ENCODE measurements at regions of chr5 and their contacts with region 1.

Region 1: DNA sequence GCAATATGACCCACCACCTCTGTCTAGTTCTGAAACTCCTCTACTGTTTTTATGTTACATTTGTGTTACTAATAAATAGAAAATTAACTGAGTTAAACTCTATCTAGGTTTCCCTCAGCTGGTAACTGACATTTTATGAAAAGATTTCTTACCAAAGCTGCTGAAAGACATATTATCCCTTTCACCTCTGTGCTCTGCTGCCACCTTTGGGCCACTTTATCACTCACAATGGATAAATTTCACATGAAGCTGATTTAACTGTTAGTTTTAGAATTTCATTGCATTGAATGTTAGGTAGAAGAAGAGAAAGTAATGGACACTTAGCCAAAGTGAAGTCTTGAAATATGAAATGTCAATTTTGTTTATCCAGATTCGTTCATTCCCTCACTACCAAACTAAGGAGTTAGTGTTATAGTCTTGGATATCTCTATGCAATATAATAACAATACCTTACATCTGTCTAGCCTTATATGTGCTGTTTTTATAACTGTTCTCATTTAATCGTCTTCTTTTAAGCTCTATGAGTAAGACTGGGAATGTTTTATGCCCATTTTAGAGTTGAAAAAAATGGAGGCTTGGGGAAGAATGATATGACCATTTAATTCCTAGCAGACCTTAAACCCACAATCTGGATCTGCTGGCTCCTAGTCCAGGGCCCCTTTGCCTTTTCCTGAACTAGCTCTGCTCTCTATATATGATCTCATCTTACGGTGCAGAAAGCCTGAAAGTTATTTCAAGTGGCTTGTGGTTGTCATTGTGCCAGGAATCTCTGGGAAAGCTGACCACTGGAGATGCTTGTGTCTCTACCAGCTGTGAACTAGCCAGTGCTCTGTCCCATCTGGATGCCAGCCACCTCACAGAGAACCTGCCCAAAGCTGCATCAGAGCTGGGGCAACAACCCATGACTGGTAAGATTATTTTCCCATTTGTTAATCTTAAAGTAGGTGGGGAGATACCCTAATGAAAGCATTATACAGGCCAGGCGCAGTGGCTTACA is 97.1 kb downstream of the GOLPH3 start:
- DNase-seq: peak; percentile 70
- H3K4me3 Mint-ChIP-seq: no peak overlapping the region
- H3K27ac Mint-ChIP-seq: no peak overlapping the region
- H3K4me1 Mint-ChIP-seq: no peaks in the 10 kb centered on the region
- H3K27me3 Mint-ChIP-seq: no peaks in the 10 kb centered on the region
- CTCF ChIP-seq: peak; percentile 75

Region 2: DNA sequence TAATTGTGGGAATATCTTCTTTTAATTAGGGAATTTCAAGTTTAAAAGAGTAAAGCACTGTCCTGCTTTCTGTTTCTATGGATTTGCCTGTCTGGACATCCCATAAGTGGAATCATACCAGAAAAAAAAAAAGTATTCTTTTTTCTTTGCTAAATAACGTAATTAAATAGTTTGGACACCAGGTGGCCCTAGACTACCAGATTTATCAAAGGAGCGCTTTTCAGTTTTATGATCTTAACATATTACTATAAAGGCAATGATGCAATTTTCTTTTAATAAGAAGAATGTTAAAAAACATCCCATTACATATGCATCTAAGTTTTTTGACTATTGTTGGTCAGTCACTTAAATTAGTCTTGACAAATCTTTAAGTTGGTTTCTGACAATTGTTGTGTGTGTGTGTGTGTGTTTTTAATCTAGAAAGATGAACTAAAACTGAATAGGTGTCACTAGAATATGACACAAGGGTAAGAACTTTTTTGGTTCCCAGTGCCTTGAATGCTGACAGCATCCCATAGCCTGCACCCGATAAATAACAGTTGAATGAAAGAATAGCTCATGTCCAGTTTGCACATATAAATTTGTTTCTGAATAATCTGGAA is 495.4 kb before region 1 on chr5:
- CTCF ChIA-PET with region 1: interaction called, 3 read pairs
- POLR2A ChIA-PET with region 1: no interaction called
- intact Hi-C with region 1: loop called (anchors 5 kb)
- DNase-seq: peak; percentile 59
- H3K4me3 Mint-ChIP-seq: no peak overlapping the region
- H3K27ac Mint-ChIP-seq: no peak overlapping the region
- H3K4me1 Mint-ChIP-seq: peaks cover 5% of the 10 kb centered on the region
- H3K27me3 Mint-ChIP-seq: peaks cover 59% of the 10 kb centered on the region
- CTCF ChIP-seq: peak; percentile 37

Region 3: DNA sequence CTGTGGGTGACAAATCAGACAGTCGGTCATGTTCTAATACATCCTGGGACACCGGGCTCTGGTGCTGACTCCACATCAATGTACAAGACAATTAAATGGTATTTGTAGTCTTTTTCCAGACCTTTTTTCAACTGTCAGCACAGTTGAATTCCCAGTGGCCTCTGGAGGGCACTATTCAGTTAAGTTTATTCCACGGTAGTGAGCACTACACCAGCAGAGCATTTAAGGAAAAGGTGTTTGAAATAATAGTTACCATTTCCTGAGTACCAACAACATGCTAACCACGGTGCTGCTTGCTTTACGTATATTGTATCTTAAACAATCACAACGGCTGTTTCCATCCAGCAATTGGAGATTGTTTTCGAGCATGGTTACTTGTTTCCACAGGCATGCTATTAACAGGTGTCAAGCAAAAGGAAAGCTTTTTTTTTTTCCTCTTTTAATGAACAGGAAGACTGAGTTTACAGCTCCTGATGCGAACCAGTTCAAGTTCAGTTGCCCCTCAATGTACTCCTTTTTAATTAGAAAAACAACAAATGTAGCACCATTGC is 251.4 kb before region 1 on chr5:
- CTCF ChIA-PET with region 1: interaction called, 193 read pairs
- POLR2A ChIA-PET with region 1: interaction called, 15 read pairs
- intact Hi-C with region 1: loop called (anchors 1 kb)
- DNase-seq: peak; percentile 76
- H3K4me3 Mint-ChIP-seq: no peak overlapping the region
- H3K27ac Mint-ChIP-seq: no peak overlapping the region
- H3K4me1 Mint-ChIP-seq: peaks cover 6% of the 10 kb centered on the region
- H3K27me3 Mint-ChIP-seq: no peaks in the 10 kb centered on the region
- CTCF ChIP-seq: peak; percentile 71

Region 4: DNA sequence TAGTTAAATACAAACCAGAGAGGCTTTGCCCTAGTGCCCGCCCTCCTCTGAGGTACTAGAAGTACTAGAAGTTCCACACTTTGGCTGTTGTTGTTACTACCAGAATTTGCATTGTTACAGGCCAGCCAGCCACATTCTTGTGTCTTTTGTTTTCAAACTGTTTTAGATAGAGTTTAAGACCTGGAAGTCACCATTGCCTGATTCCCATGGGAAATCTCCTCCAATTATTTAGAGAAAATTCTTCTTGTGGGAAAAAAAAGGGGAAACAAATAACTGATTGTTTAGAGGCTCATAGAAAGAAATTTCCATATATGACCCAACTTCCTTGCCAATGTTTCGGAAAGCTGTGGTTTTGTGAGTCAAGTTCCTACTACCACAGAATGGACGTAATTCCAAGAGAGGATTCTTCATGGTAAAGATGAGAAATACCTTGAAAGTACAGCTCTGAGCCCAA is 155.1 kb before region 1 on chr5:
- CTCF ChIA-PET with region 1: interaction called, 12 read pairs
- POLR2A ChIA-PET with region 1: interaction called, 3 read pairs
- intact Hi-C with region 1: no loop called
- DNase-seq: peak; percentile 89
- H3K4me3 Mint-ChIP-seq: no peak overlapping the region
- H3K27ac Mint-ChIP-seq: peak overlapping the region; percentile 69
- H3K4me1 Mint-ChIP-seq: peaks cover 11% of the 10 kb centered on the region
- H3K27me3 Mint-ChIP-seq: no peaks in the 10 kb centered on the region
- CTCF ChIP-seq: no peak

Region 5: GRCh38 chr5:32027717-32028321 is 49.2 kb before region 1 on chr5:
- CTCF ChIA-PET with region 1: interaction called, 11 read pairs
- POLR2A ChIA-PET with region 1: no interaction called
- intact Hi-C with region 1: no loop called
- DNase-seq: peak; percentile 98
- H3K4me3 Mint-ChIP-seq: peak overlapping the region; percentile 38
- H3K27ac Mint-ChIP-seq: peak overlapping the region; percentile 86
- H3K4me1 Mint-ChIP-seq: peaks cover 54% of the 10 kb centered on the region
- H3K27me3 Mint-ChIP-seq: no peaks in the 10 kb centered on the region
- CTCF ChIP-seq: no peak